Left colon (tissue), 2 donors: ENCODE measurements at regions of chr19 and their contacts with region 1.

Region 1: DNA sequence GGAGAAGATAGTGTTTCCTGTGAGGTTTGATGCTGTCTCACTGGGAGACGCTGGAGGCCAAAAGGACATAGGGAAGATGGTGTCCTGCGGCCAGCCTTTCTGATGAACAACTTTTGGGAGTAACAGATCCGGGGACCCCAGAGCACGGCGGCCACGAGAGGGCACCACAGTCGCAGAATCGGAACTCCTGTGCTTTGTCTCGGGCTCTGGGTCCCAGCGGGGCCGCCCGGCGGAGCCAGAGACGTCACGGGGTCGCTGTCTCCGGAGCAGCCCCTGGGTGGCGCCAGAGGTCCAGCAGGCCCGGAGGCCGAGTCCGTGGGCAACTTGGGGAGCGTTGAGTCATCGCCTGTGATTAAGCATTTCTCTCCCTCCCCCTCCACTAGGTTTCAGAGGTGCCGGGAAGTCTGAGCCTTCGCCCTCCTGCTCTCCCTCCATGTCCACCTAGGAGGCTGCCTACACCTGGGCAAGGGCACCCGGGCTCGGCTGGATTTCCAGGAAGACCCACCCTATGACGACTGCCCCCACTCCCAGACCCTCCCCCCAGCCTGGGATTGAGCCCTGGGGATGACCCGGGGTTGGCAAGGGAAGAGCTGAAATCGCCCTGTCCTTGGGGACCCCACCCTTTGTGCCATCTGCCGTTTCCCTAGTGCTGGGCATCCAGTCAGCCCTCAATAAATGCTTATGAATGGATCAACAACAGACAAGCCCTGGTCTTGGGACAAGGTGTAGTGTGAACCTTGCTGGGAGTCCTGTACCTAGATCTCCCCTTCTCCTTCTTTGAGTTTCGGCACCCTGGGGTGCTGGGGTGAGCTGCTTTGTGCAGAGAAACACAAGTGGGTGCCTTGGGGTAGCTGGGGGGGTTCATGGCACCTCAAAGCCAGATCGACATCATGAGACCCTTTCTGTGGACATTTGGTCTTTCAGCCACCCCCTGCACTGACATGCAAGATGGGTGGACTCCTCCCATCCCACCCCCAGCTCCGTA is 3.4 kb downstream of the NANOS3 start:
- DNase-seq: peak; percentile 95 to 99
- ATAC-seq: peak; percentile 80

Region 2: DNA sequence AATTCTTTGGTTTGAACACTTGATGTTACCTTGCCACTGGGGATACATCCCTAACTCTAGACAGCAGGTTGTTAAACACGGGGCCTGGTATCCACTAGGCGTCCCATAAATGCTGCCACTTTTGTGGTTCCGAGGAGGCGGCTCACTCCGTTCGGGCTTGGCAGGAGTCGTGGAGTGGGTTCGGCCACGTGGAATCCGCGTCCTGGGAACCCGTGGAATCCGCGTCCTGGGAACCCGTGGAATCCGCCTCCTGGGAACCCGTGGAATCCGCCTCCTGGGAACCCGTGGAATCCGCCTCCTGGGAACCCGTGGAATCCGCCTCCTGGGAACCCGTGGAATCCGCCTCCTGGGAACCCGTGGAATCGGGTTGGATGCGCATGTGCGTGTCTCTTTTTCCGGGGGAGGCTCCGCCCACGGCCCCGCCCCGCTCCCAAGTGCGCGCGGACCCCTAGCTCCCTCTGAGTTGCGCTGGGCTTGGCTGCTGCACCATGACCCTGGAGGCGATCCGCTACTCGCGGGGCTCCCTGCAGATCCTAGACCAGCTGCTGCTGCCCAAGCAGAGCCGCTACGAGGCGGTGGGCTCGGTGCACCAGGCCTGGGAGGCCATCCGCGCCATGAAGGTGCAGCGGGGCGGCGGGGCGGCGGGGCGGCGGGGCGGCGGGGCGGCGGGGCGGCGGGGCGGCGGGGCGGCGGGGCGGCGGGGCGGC is 116.1 kb before region 1 on chr19 and contains the start of gene MRI1:
- intact Hi-C with region 1: no loop called
- DNase-seq: peak; percentile 79 to 90
- ATAC-seq: peak; percentile 91
- total RNA-seq, gene MRI1: 31.3 to 31.8 TPM

Region 3: DNA sequence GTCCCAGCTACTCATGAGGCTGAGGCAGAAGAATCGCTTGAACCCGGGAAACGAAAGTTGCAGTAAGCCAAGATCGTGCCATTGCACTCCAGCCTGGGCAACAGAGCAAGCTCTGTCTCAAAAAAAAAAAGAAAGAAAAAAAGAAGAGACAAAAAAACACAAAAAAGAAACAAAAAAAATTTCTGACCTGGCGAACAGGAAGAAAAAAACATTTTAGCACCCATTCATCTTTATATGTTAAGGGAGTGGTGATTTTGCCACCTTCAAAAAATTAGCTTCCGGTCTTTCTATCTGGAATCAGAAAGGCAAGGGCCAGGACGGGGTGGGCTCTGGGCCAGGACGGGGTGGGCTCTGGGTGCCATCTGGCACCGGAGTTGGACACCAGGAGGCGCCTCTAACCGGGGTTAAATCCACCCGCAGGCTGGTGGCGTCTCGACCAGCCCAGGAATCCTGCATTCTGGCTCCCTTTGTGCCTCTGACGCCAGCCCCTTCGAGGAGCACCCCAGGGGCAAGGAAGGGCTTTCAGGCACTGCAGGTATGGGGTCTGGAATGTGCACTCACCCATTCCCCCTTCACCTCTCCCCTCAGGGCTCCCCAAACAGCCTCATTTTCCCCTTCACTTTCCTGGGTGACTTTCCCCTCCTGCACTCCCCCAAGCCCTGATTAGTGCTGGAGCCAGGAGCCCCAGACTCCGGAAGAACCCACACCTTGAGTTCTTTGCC is 95.5 kb before region 1 on chr19:
- intact Hi-C with region 1: no loop called
- DNase-seq: peak; percentile 65 to 86
- ATAC-seq: peak; percentile 60

Region 4: DNA sequence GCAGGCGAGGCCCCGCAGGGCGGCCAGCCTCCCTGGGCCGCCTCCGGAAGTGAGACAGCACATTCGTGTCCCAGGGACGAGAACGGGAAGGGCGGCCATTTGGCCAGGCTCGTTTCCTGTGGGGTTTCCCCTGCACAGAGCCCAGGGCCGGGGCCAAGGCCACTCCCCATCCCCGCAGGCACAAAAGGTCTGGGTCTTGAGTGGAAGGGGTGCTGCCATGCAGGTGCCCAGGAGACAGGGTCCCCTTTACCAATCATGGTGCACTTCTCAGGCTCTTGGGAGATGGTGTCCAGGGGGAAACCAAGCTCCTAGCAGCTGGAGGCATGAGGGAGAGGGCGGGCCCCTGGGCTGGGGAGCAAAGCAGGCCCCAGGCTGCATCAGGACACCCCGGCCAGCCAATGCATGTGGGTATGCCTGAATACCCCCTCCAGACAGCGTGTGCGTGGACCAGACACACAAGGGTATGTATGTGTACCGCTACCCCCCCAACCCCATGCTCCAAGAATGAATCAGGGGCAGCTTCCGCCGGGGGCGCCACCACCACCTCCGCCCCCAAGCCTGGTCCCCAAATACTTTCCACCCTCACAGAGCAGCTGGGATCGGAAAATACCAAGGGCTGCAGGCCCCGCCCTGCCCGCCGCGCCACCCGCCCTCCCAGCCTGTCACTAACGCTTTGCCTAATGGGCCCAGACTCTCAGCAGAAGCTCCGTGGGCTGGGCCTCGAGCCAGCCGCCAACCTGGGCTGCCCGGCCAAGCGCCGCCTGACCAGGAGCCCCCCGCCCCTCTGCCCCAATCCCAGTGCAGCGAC is 41.0 kb before region 1 on chr19:
- intact Hi-C with region 1: no loop called
- DNase-seq: peak; percentile 89 to 90
- ATAC-seq: peak; percentile 53

Region 5: GRCh38 chr19:13935765-13936510 is 55.6 kb after region 1 on chr19:
- intact Hi-C with region 1: no loop called
- DNase-seq: no peak
- ATAC-seq: no peak

Region 6: GRCh38 chr19:14059093-14059480 is 178.7 kb after region 1 on chr19:
- intact Hi-C with region 1: loop called in 1 of 2 experiments (anchors 5 kb)
- DNase-seq: no peak
- ATAC-seq: peak; percentile 26

Region 7: DNA sequence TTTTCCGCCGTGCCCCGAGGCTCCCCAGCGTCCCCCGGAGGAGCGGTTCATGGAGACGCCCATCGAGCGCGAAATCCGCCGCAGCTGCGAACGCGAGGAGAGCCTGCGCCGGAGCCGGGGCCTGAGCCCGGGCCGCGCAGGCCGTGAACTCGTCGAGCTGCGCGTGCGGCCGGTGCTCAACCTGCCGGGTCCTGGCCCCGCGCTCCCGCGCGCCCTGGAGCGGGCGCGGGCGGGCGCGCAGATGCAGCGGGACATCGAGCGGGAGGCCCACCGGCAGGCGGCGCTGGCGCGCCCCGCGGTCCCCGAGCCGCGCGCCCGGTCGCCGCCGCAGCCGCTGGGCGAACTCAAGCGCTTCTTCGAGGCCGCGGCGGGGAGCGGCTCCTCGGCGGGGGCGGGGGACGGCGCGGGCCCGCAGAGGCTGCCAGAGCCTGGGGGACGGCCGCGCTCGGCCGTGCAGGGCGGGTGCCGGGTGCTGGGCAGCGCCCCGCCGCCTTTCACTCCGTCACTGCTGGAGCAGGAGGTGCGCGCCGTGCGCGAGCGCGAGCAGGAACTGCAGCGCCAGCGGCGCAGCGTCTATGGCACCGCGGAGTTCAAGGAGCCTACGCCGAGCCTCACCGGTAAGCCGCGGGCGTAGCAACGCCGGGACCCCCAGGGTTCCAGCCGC is 193.0 kb after region 1 on chr19:
- intact Hi-C with region 1: loop called (anchors 2 to 10 kb)
- DNase-seq: peak in 1 of 2 donors; percentile 85
- ATAC-seq: peak; percentile 28